Cardiac septum (tissue), 1 donor: ENCODE measurements at regions of chr1 and their contacts with region 1.

Region 1: DNA sequence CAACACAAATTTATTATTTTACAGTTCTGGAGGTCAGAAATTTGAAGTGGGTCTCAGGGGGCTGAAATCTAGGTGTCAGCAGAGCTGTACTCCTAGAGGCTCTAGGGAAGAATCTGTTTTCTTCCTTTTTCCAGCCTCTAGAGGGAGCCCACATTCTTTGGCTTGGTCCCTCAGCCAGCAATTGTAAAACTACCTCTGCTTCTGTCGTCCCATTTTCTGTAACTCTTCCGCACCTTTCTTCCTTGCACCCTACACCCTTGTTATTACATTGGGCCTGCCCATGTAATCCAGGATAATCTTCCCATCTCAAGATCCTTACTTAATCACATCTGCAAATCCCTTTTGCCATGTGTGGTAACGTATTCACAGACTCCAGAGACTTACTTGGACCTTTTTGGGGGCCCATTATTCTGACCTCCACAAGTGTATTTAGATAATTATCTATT is 24.8 kb upstream of the THEM4 start:
- DNase-seq: no peak

Region 2: GRCh38 chr1:151968058-151968457 is 34.0 kb after region 1 on chr1:
- intact Hi-C with region 1: loop called (anchors 2 kb)
- DNase-seq: no peak